Activated CD4-positive, alpha-beta T cell treated with anti-CD3 and anti-CD28 coated beads, Interleukin-2, amount 10 ng/mL, durations not matched to agents 24 days and 14 days (primary cell): ENCODE measurements at regions of chr1 and their contacts with region 1.

Region 1: DNA sequence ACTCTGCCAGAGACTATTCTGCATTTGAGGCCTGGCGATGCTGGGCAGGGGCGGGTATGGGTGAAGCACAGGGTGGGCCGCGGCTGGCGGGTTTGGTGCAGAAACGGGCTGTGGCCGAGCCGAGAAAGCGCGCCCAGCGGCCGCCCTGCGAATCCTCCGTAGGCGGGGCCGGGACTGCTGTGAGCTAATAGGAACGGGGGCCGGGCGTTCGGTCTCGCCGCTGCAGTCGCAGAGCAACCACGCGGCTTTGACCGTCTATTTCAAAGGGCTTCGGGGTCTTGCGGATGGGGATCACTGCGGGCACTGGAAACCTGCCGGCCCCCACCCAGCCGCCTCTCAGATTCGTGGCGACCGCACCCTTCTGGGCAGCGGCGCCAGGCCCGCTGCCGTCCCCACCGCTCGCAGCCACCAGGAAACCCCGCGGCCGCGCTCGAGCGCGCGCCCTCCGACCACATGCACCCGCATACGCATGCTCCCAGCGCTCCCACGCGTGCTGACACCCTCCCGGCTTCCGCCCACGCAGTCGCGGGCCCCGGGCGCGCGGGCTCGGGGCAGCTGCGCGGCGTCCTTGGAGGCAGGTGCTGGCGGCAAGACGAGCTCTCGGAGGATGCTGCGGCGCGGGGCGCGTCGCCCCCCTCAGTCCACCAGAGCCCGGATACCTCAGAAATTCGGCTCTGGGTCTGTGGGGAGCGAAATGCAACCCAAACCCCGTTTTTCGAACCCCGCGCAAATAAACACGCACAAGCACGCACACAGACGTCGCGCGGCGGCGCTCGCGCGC is 32.6 kb downstream of the DNTTIP2 start:
- DNase-seq: peak; percentile 95
- H3K4me3 Mint-ChIP-seq: peak overlapping the region; percentile 98
- H3K27ac Mint-ChIP-seq: peak overlapping the region; percentile 95
- H3K4me1 Mint-ChIP-seq: peaks cover 26% of the 10 kb centered on the region
- H3K27me3 Mint-ChIP-seq: peaks cover 8% of the 10 kb centered on the region

Region 2: GRCh38 chr1:92975551-92976232 is 870.7 kb before region 1 on chr1:
- intact Hi-C with region 1: loop called (anchors 10 kb)
- DNase-seq: peak; percentile 59
- H3K4me3 Mint-ChIP-seq: peak overlapping the region; percentile 6
- H3K27ac Mint-ChIP-seq: peak overlapping the region; percentile 79
- H3K4me1 Mint-ChIP-seq: peaks cover 60% of the 10 kb centered on the region
- H3K27me3 Mint-ChIP-seq: no peaks in the 10 kb centered on the region

Region 3: GRCh38 chr1:93078986-93079654 is 767.3 kb before region 1 on chr1 and contains the start of gene MTF2:
- intact Hi-C with region 1: loop called (anchors 10 kb)
- DNase-seq: peak; percentile 98
- H3K4me3 Mint-ChIP-seq: peak within 1 kb of the TSS; percentile 99
- H3K27ac Mint-ChIP-seq: peak within 1 kb of the TSS; percentile 94
- H3K4me1 Mint-ChIP-seq: peaks cover 35% of the 10 kb centered on the region
- H3K27me3 Mint-ChIP-seq: no peaks in the 10 kb centered on the region
- total RNA-seq, gene MTF2: 63.7 and 64.3 TPM in 2 replicates

Region 4: GRCh38 chr1:93437976-93438605 is 408.3 kb before region 1 on chr1:
- intact Hi-C with region 1: loop called (anchors 2 kb)
- DNase-seq: no peak
- H3K4me3 Mint-ChIP-seq: no peak overlapping the region
- H3K27ac Mint-ChIP-seq: no peak overlapping the region
- H3K4me1 Mint-ChIP-seq: no peaks in the 10 kb centered on the region
- H3K27me3 Mint-ChIP-seq: peaks cover 25% of the 10 kb centered on the region

Region 5: GRCh38 chr1:93629099-93630059 is 217.0 kb before region 1 on chr1:
- intact Hi-C with region 1: loop called (anchors 1 kb)
- DNase-seq: peak; percentile 84
- H3K4me3 Mint-ChIP-seq: no peak overlapping the region
- H3K27ac Mint-ChIP-seq: no peak overlapping the region
- H3K4me1 Mint-ChIP-seq: no peaks in the 10 kb centered on the region
- H3K27me3 Mint-ChIP-seq: peaks cover 10% of the 10 kb centered on the region

Region 6: GRCh38 chr1:93878889-93879586 is 32.6 kb after region 1 on chr1 and contains the start of gene DNTTIP2:
- intact Hi-C with region 1: loop called (anchors 1 kb)
- DNase-seq: peak; percentile 97
- H3K4me3 Mint-ChIP-seq: peak within 1 kb of the TSS; percentile 93
- H3K27ac Mint-ChIP-seq: peak within 1 kb of the TSS; percentile 97
- H3K4me1 Mint-ChIP-seq: peaks cover 33% of the 10 kb centered on the region
- H3K27me3 Mint-ChIP-seq: no peaks in the 10 kb centered on the region
- total RNA-seq, gene DNTTIP2: 85.4 and 89.9 TPM in 2 replicates

Region 7: DNA sequence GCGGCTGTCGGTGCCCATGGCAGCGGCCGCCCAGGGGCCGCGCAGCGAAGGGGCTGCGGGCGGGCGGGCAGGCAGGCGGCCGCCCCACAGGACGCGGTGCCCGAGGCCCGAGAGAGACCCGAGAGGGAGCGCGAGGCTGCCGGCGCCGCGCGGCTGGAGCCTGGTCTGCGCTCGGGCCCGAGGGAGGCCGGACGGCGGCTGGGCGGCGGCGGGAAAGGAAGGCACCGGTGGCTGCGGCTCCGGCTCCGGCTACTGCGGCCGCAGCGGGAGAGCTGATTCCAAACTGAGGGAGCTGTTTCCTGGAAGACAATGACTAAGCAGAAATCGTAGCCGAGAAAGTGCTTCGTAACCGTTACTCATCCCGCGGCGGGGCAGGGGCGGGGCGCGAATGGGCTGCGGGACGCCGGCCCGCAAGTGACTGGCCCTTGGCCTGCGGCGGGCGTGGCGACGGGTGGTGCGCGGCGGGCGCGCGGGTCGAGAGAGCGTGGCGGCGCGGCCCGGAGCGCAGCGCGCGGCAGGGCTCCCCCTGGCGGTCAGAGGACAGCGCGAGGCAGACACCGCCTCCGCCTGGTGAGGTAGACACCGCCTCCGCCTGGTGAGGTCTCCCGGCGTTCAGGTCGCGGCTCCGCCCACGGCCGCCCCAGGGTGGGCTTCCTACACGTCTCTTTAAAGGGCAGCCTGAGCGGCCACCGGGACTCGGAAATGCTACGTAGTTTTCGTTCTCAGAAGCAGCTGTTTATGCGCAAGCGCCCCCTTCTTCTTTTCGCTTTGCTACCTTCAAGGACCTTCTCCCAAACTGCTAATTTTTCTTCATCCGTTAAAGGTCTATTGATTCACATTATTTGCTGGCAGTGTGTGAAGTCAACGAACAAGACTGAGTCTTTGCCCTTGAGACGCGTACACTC is 63.0 kb after region 1 on chr1 and contains the start of gene GCLM:
- intact Hi-C with region 1: loop called (anchors 1 kb)
- DNase-seq: peak; percentile 97
- H3K4me3 Mint-ChIP-seq: peak within 1 kb of the TSS; percentile 87
- H3K27ac Mint-ChIP-seq: peak within 1 kb of the TSS; percentile 93
- H3K4me1 Mint-ChIP-seq: peaks cover 29% of the 10 kb centered on the region
- H3K27me3 Mint-ChIP-seq: peaks cover 20% of the 10 kb centered on the region
- total RNA-seq, gene GCLM: 20.9 and 22.4 TPM in 2 replicates